ENCODE measurements at regions of chr20 and their contacts with region 1.

Region 1: GRCh38 chr20:24261351-24261750 is 208.1 kb upstream of the SYNDIG1 start:
- DNase-seq: no peak
- ATAC-seq: no peak
- H3K4me3 ChIP-seq: no peak overlapping the region
- H3K27ac ChIP-seq: no peak overlapping the region
- H3K4me1 ChIP-seq: no peaks in the 10 kb centered on the region
- H3K27me3 ChIP-seq: peaks cover 0 to 33% (median 0%) of the 10 kb centered on the region in 9 donors
- CTCF ChIP-seq: no peak
- POLR2A ChIP-seq: no peak

Region 2: GRCh38 chr20:24328901-24329300 is 67.5 kb after region 1 on chr20:
- intact Hi-C with region 1: loop called in 1 of 10 experiments (anchors 10 kb)
- DNase-seq: no peak
- ATAC-seq: no peak
- H3K4me3 ChIP-seq: no peak overlapping the region
- H3K27ac ChIP-seq: no peak overlapping the region
- H3K4me1 ChIP-seq: no peaks in the 10 kb centered on the region
- H3K27me3 ChIP-seq: peaks cover 0 to 7% (median 0%) of the 10 kb centered on the region in 9 donors
- CTCF ChIP-seq: no peak
- POLR2A ChIP-seq: no peak

Region 3: DNA sequence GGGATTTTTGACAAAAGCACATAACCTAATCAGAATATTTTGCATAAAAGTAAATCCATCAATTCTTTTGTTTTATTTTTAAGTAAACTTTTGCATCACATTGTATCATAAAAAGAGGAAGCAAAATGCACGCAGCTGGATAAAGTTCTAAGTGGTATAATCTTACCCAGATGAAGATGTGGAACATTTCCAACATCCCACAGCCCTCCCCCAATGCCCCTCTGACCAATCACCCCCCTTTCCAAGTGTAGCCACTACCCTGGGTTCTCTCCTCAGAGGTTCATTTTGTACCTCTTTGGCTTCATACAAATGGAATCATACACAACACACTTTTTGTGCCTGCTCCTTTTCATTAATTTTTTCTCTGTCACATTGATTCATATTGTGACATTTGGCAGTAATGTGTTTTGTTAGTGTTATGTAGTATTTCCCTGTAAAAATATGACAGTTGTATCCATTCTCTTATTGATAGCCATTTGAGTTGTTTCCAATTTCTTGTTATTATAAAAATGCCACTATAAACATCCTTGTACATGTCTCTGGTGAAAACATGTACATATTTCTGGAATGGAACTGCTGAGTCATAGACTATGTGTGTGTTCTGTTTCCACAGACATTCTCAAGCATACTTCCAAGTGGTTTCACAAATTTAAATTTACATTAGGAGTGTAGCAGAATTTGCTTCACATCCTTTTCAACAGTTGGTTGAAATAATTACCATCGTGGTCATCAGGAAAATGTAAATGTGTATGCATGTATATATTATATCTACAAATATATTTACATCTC is 115.2 kb after region 1 on chr20:
- intact Hi-C with region 1: no loop called
- DNase-seq: no peak
- ATAC-seq: no peak
- H3K4me3 ChIP-seq: no peak overlapping the region
- H3K27ac ChIP-seq: no peak overlapping the region
- H3K4me1 ChIP-seq: peaks cover 0 to 7% (median 0%) of the 10 kb centered on the region in 12 donors
- H3K27me3 ChIP-seq: no peaks in the 10 kb centered on the region
- CTCF ChIP-seq: no peak
- POLR2A ChIP-seq: no peak

Region 4: DNA sequence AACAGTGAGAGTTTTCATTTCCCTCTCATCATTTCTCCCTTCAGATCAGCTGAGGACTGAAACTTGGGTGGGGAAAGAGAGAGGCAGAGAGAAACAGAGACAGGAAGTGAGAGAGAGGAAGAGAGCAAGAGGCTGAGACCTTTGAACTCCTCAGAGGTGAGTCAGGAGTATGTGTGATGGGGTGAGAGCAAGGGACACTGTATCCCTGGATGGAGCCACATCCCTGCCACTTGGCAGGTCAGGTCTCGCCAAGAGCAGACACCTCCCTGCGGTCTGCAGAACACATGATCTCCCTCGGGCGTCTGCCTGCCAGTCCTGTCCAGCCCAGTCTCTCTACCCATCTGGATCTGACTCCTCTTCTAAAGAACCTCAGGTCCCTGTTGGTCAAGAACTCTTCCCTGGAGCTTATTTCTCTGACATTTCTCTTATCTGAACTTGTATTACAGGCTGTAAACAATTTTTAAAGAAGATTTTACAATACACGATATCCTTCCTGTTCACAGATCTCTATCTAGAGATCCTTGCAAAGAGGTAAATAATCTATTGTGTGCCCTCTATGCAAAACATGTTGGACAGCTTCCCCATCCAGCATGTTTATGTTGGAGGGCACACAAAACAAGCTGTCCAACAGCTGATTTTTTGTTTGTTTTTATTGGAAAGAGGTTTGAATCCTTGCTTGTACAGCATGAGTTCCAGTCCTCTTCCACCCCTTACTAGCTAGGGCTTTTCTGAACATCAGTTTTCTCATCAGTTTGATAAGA is 145.6 kb after region 1 on chr20:
- intact Hi-C with region 1: no loop called
- DNase-seq: no peak
- ATAC-seq: peak in 1 of 4 donors; percentile 34
- H3K4me3 ChIP-seq: no peak overlapping the region
- H3K27ac ChIP-seq: no peak overlapping the region
- H3K4me1 ChIP-seq: peaks cover 0 to 15% (median 0%) of the 10 kb centered on the region in 12 donors
- H3K27me3 ChIP-seq: peaks cover 0 to 4% (median 0%) of the 10 kb centered on the region in 9 donors
- CTCF ChIP-seq: peak in 1 of 12 donors; percentile 9
- POLR2A ChIP-seq: no peak